CD8-positive, alpha-beta memory T cell (primary cell): ENCODE measurements at regions of chr11 and their contacts with region 1.

Region 1: DNA sequence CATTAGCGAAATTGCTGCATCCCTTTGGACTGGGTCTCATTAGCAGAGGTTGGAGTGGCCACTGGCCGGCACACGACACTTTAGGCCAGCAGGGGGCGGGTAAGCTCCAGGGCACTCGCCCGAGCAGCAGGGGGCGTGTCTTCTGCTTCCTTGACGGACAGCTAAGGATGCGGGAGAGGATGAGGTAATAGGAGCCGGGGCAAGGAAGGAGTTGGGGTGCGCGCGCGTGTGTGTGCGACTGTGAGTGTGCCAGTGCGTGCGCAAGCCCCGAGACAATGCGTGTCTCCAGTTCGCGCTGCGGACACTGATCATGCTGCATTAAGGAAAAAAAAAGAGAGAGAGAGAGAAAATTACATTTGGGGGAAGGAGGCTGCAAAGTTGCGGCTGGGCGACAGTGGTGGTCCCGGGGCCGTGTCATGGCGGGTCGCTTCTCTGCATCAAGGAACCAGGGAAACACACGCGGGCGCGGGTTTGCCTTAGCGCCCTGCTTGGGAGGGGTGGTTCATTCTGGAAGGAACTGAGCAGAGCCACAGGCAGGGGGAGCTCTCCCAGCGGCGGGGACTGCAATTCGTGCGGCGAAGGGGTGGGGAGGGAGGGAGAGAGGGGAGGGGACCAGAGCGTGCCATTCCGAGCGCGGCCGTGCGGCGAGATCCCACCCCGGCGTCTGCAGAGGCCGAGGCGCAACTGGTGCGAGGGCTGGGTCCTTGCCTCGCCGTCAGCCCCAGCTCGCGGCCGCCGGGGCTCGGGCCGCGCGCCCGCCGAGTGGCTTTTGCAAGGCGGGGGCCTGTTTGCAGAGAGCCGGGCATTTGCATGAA is at the start of gene DTX4:
- DNase-seq: peak; percentile 81 to 91 (median 86)
- H3K4me3 ChIP-seq: peak within 1 kb of the TSS; percentile 80
- H3K4me3 Mint-ChIP-seq: peak within 1 kb of the TSS; percentile 82 to 92 (median 91)
- H3K27ac ChIP-seq: peak within 1 kb of the TSS; percentile 49
- H3K27ac Mint-ChIP-seq: peak within 1 kb of the TSS in 6 of 8 donors; percentile 21 to 73 (median 51)
- H3K4me1 ChIP-seq: peaks cover 9% of the 10 kb centered on the region
- H3K4me1 Mint-ChIP-seq: peaks cover 7 to 10% (median 8%) of the 10 kb centered on the region in 3 donors
- H3K27me3 ChIP-seq: peaks cover 9% of the 10 kb centered on the region
- H3K27me3 Mint-ChIP-seq: peaks cover 3 to 7% of the 10 kb centered on the region in 2 donors
- total RNA-seq, gene DTX4: 0.24 to 0.38 TPM

Region 2: GRCh38 chr11:59040607-59041006 is 131.1 kb before region 1 on chr11:
- CTCF ChIA-PET with region 1: no interaction called
- POLR2A ChIA-PET with region 1: no interaction called
- DNase-seq: no peak
- H3K4me3 ChIP-seq: no peak overlapping the region
- H3K4me3 Mint-ChIP-seq: no peak overlapping the region
- H3K27ac ChIP-seq: no peak overlapping the region
- H3K27ac Mint-ChIP-seq: no peak overlapping the region
- H3K4me1 ChIP-seq: no peaks in the 10 kb centered on the region
- H3K4me1 Mint-ChIP-seq: no peaks in the 10 kb centered on the region
- H3K27me3 ChIP-seq: peaks cover 4% of the 10 kb centered on the region
- H3K27me3 Mint-ChIP-seq: peaks cover 15 to 50% of the 10 kb centered on the region in 2 donors

Region 3: GRCh38 chr11:59152312-59152951 is 19.3 kb before region 1 on chr11:
- CTCF ChIA-PET with region 1: interaction called, 29 read pairs
- POLR2A ChIA-PET with region 1: no interaction called
- DNase-seq: no peak
- H3K4me3 ChIP-seq: no peak overlapping the region
- H3K4me3 Mint-ChIP-seq: peak overlapping the region in 6 of 7 donors; percentile 29 to 65 (median 44)
- H3K27ac ChIP-seq: no peak overlapping the region
- H3K27ac Mint-ChIP-seq: peak overlapping the region; percentile 5 to 89 (median 48)
- H3K4me1 ChIP-seq: peaks cover 4% of the 10 kb centered on the region
- H3K4me1 Mint-ChIP-seq: peaks cover 14 to 47% (median 39%) of the 10 kb centered on the region in 3 donors
- H3K27me3 ChIP-seq: no peaks in the 10 kb centered on the region
- H3K27me3 Mint-ChIP-seq: no peaks in the 10 kb centered on the region

Region 4: GRCh38 chr11:59186130-59186594 is 14.4 kb after region 1 on chr11:
- CTCF ChIA-PET with region 1: interaction called, 92 read pairs
- POLR2A ChIA-PET with region 1: interaction called, 3 read pairs
- DNase-seq: peak; percentile 35 to 64 (median 42)
- H3K4me3 ChIP-seq: no peak overlapping the region
- H3K4me3 Mint-ChIP-seq: no peak overlapping the region
- H3K27ac ChIP-seq: no peak overlapping the region
- H3K27ac Mint-ChIP-seq: peak overlapping the region in 2 of 8 donors; percentile 3 to 42
- H3K4me1 ChIP-seq: no peaks in the 10 kb centered on the region
- H3K4me1 Mint-ChIP-seq: no peaks in the 10 kb centered on the region
- H3K27me3 ChIP-seq: no peaks in the 10 kb centered on the region
- H3K27me3 Mint-ChIP-seq: peaks cover 4 to 13% of the 10 kb centered on the region in 2 donors

Region 5: DNA sequence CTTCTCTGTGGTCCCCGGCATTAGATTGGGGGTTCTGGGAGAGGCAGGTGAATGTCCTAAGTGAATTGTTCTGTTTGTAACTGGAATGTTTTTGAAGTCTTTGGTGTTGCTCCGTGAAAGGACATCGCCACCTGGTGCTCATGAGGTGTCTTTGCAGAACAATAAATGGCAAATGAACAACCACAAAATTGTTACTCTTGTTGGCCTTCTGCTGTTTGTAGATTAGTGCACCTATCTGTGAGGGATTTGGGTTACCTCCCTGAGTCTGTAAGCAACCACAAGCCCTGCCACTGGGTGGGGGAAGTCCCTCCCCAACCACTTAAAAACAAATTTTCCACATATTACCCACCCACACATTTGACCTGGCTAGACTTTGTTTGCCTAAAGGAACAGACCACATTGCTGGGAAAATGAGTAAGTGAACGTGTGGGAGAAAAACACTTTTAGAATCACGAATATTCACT is 36.3 kb after region 1 on chr11:
- CTCF ChIA-PET with region 1: interaction called, 19 read pairs
- POLR2A ChIA-PET with region 1: no interaction called
- DNase-seq: peak in 4 of 5 donors; percentile 6 to 39 (median 16)
- H3K4me3 ChIP-seq: no peak overlapping the region
- H3K4me3 Mint-ChIP-seq: peak overlapping the region in 6 of 7 donors; percentile 6 to 65 (median 43)
- H3K27ac ChIP-seq: no peak overlapping the region
- H3K27ac Mint-ChIP-seq: peak overlapping the region in 3 of 8 donors; percentile 0 to 39 (median 35)
- H3K4me1 ChIP-seq: peaks cover 15% of the 10 kb centered on the region
- H3K4me1 Mint-ChIP-seq: peaks cover 12 to 24% (median 21%) of the 10 kb centered on the region in 3 donors
- H3K27me3 ChIP-seq: no peaks in the 10 kb centered on the region
- H3K27me3 Mint-ChIP-seq: peaks cover 15 to 21% of the 10 kb centered on the region in 2 donors